Tibial artery (tissue), 4 donors: ENCODE measurements at regions of chr4 and their contacts with region 1.

Region 1: DNA sequence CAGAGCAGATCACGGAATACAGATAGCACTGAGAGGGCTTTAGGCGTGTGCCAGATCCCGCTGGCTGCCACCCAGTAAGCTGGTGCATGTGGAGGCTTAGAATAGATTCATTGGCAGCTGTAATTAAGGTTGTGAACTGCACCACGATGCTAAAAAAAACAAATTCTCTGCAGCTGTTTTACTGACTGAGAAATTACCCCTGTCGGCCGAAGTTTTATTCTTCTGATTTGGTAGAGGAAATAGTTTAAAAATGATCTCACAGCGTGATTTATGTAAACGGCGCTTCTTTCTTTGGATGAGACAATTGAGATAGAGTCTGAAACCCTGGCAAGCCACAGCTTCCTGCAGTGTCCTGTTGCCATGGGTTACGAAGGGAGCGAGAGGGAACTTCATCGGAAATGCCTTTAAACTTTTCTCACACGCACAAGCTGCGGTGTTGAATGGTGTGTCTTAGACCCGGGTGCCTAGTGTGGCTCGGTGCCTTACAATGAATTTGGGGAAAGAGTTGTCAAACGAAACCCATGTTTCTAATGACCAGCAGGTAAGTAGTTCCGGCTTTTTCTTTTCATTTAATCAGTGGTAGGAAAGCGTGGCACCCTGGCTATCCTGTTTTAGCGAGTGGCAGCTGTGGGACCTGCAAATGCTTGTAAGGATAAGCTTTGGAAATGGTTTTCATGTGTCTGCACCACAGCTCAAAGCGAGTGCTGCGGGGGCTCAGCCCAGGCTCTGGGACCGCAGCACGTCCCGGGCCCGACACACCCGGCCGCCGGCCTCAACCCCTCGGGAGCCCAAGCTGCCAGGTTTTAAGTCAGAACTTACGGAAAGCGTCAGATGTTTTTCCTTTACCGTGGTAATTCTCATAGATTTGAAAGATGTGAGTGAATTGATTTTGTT is 71.7 kb upstream of the HGFAC start:
- DNase-seq: peak in 1 of 2 donors; percentile 53
- H3K4me3 ChIP-seq: peak overlapping the region; percentile 28 to 42
- H3K27ac ChIP-seq: peak overlapping the region; percentile 32 to 45
- H3K4me1 ChIP-seq: peaks cover 4 to 20% (median 15%) of the 10 kb centered on the region in 4 donors
- H3K27me3 ChIP-seq: no peaks in the 10 kb centered on the region
- CTCF ChIP-seq: peak in 1 of 2 experiments; percentile 21

Region 2: GRCh38 chr4:3420606-3420955 is 50.6 kb after region 1 on chr4:
- intact Hi-C with region 1: loop called (anchors 10 kb)
- DNase-seq: peak in 1 of 2 donors; percentile 48
- H3K4me3 ChIP-seq: no peak overlapping the region
- H3K27ac ChIP-seq: no peak overlapping the region
- H3K4me1 ChIP-seq: no peaks in the 10 kb centered on the region
- H3K27me3 ChIP-seq: no peaks in the 10 kb centered on the region
- CTCF ChIP-seq: no peak